ENCODE measurements at regions of chr13 and their contacts with region 1.

Region 1: GRCh38 chr13:25391293-25391692 is 19.5 kb downstream of the ATP8A2 start:
- DNase-seq: no peak
- H3K4me3 ChIP-seq: no peak overlapping the region
- H3K27ac ChIP-seq: no peak overlapping the region
- H3K4me1 ChIP-seq: no peaks in the 10 kb centered on the region
- H3K27me3 ChIP-seq: peaks cover 2% of the 10 kb centered on the region
- CTCF ChIP-seq: no peak

Region 2: GRCh38 chr13:25062485-25062884 is 328.8 kb before region 1 on chr13:
- CTCF ChIA-PET with region 1: no interaction called
- dilution Hi-C with region 1: no loop called
- in situ Hi-C with region 1: no loop called
- intact Hi-C with region 1: no loop called
- DNase-seq: no peak
- H3K4me3 ChIP-seq: no peak overlapping the region
- H3K27ac ChIP-seq: no peak overlapping the region
- H3K4me1 ChIP-seq: no peaks in the 10 kb centered on the region
- H3K27me3 ChIP-seq: peaks cover 5% of the 10 kb centered on the region
- CTCF ChIP-seq: no peak

Region 3: GRCh38 chr13:25507841-25508240 is 116.5 kb after region 1 on chr13:
- CTCF ChIA-PET with region 1: interaction called, 12 read pairs
- dilution Hi-C with region 1: no loop called
- in situ Hi-C with region 1: no loop called
- intact Hi-C with region 1: no loop called
- DNase-seq: no peak
- H3K4me3 ChIP-seq: no peak overlapping the region
- H3K27ac ChIP-seq: no peak overlapping the region
- H3K4me1 ChIP-seq: no peaks in the 10 kb centered on the region
- H3K27me3 ChIP-seq: no peaks in the 10 kb centered on the region
- CTCF ChIP-seq: no peak